Thyroid gland (tissue), 4 donors: ENCODE measurements at regions of chr16 and their contacts with region 1.

Region 1: GRCh38 chr16:30082545-30083090 is 6.8 kb downstream of the PPP4C start:
- DNase-seq: no peak
- H3K4me3 ChIP-seq: no peak overlapping the region
- H3K27ac ChIP-seq: no peak overlapping the region
- H3K4me1 ChIP-seq: peaks cover 0 to 2% of the 10 kb centered on the region in 2 donors
- H3K27me3 ChIP-seq: no peaks in the 10 kb centered on the region
- CTCF ChIP-seq: no peak
- POLR2A ChIP-seq: no peak

Region 2: DNA sequence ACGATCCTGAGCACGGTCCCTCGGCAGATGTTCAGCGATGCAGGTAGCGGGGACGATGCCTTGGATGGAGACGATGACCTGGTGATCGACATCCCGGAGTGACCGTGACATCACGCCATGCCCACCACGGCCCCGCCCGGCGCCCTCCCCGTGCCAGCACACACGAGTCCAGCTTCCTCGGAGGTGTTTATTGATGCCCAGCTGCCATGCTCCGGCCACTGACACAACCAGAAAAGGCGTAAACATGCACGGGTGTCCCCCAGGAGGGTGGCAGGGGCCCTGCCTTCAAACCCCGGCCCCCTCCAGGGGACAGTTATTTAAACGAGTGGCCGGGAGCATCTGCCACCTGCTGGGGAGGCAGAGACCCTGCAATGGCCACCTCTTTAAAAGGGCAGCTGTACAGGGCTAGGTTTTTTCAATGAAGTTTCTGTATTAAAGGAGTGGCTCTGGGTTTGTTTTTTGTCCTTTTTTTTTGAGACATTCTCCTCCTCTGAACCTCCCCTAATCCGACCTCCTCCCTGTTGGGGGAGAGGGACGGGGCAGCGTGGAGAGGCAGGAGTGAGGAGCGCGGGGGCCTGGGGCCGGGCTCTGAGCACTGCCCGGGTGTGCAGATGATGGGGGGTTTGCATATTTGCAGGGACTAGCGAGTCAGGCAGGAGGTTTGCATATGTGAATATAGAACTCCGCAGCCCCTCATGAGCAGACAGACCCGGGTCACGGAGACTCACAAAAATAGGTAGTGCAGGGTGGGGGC is 77.1 kb before region 1 on chr16:
- intact Hi-C with region 1: no loop called
- DNase-seq: peak; percentile 20 to 21
- H3K4me3 ChIP-seq: no peak overlapping the region
- H3K27ac ChIP-seq: no peak overlapping the region
- H3K4me1 ChIP-seq: peaks cover 2% of the 10 kb centered on the region in 2 donors
- H3K27me3 ChIP-seq: peaks cover 8% of the 10 kb centered on the region
- CTCF ChIP-seq: peak; percentile 49 to 81 (median 62)
- POLR2A ChIP-seq: no peak

Region 3: DNA sequence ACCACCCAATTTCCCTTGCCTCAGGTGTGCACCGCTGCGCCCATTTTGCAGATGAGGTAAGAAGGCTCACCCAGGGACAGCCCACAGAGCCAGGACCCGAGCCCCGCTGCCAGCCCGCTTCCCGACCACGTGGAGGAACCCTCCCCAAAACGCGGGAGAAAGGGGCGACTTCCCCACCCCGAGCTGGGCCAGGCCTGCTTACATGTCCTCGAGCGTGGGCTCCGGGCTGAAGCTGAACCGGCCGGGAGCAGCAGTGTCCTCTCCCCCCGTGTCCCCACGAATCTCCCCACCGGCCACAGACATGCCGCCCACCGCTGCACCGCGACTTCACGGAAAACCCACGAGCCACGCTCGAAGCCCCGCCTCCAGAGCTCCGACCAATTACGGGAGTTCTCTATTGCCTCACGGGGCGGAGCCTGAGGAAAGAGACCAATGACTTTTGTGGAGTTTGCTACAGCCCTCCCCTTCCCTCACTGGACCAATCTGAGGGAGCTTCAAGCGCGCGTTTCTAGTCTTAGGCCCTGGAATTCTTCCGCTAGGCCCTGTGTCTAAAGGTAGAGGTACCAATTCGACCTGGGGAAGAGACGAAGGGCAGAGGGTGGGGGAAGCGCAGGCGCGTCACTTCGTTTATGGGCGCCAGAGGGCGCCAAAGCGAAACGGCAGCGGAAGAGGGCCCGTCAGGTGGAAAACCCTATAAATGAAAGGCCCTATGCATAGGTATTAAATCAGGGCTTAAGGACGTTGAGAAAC is 347.2 kb after region 1 on chr16 and contains the start of gene DCTPP1:
- intact Hi-C with region 1: loop called (anchors 10 kb)
- DNase-seq: peak; percentile 98 to 99
- H3K4me3 ChIP-seq: peak within 1 kb of the TSS; percentile 19 to 68 (median 24)
- H3K27ac ChIP-seq: peak within 1 kb of the TSS; percentile 27 to 76 (median 69)
- H3K4me1 ChIP-seq: peaks cover 10 to 22% of the 10 kb centered on the region in 2 donors
- H3K27me3 ChIP-seq: no peaks in the 10 kb centered on the region
- CTCF ChIP-seq: peak in 5 of 6 experiments; percentile 18 to 91 (median 81)
- POLR2A ChIP-seq: peak in 1 of 2 donors; percentile 59
- total RNA-seq, gene DCTPP1: 18.8 to 26.4 (median 22.5) TPM